ENCODE measurements at regions of chr1 and their contacts with region 1.

Region 1: GRCh38 chr1:88877382-88877825 is 14.0 kb downstream of the GTF2B start:
- DNase-seq: no peak
- ATAC-seq: no peak
- H3K4me3 ChIP-seq: no peak overlapping the region
- H3K27ac ChIP-seq: no peak overlapping the region
- H3K4me1 ChIP-seq: peaks cover 17 to 28% of the 10 kb centered on the region in 2 donors
- H3K27me3 ChIP-seq: no peaks in the 10 kb centered on the region
- CTCF ChIP-seq: peak; percentile 39 to 58 (median 51)
- POLR2A ChIP-seq: no peak

Region 2: DNA sequence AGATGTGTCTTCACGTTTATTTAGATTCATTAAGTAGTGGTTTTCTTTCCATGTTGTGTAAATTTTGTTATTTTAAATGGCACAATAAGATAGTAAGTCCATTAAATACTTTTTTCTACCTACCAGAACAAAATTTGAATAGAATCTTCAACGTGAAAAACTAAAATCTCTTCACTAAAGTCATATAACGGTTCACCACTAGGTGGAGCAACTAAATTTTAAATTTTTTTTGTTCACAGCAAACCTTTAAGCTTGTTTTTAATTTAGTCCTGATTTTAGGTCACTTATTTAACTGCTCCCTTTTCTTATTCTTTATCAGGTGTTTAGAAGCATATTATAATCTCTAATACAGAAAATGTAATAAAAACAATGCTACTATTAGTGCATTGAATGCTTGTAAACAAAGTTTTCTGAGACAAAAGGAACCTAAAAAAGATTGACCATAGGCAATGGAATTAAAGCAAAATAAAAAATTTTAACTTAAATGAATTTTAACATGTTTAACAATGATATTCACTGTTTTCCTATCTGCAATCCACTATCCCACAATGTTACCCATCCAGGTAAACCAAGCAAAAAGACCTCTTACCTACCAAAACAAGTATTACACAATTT is 221.6 kb before region 1 on chr1:
- in situ Hi-C with region 1: loop called (anchors 10 to 25 kb)
- intact Hi-C with region 1: loop called (anchors 5 kb)
- DNase-seq: no peak
- ATAC-seq: no peak
- H3K4me3 ChIP-seq: no peak overlapping the region
- H3K27ac ChIP-seq: no peak overlapping the region
- H3K4me1 ChIP-seq: no peaks in the 10 kb centered on the region
- H3K27me3 ChIP-seq: no peaks in the 10 kb centered on the region
- CTCF ChIP-seq: peak; percentile 30 to 69 (median 61)
- POLR2A ChIP-seq: no peak

Region 3: DNA sequence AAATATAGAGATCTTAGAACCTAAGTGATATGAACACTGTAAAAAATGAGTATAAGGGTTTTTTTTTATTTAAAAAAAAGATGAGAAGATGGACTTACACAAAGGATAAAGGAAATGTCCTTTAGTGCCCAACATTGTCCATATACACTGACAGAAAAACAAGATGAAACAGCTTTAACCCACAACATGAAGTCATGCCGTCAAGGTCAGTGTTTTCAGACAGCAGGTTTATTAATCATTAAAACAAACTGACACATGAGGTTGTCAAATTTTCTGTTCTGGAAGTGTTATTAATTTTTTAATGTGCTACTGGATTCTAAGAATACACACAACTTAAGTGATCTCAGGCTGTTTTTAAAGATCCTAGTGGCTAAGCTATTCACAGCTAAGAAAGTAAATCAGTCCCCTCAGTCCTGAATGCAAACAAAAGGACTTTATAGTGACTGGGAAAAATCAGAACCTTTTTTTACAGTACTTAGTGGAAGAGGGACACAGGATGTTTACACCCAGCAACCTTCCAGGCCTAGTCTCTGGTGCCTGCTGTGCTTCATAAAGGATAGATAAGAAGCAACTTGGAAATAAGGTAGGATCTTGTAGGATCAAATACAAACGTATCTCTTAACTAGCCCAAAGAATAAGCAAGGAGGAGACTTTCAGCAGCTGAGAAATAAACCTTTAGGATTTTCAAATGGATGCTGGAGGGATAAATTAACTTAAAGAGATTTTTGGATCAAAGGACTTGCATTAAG is 215.3 kb before region 1 on chr1:
- in situ Hi-C with region 1: loop called (anchors 10 to 25 kb)
- intact Hi-C with region 1: no loop called
- DNase-seq: no peak
- ATAC-seq: no peak
- H3K4me3 ChIP-seq: no peak overlapping the region
- H3K27ac ChIP-seq: no peak overlapping the region
- H3K4me1 ChIP-seq: no peaks in the 10 kb centered on the region
- H3K27me3 ChIP-seq: no peaks in the 10 kb centered on the region
- CTCF ChIP-seq: no peak
- POLR2A ChIP-seq: no peak

Region 4: GRCh38 chr1:88800382-88801051 is 76.9 kb before region 1 on chr1:
- in situ Hi-C with region 1: loop called in 1 of 4 experiments (anchors 10 kb)
- intact Hi-C with region 1: loop called (anchors 5 kb)
- DNase-seq: no peak
- ATAC-seq: peak in 1 of 2 donors; percentile 66
- H3K4me3 ChIP-seq: no peak overlapping the region
- H3K27ac ChIP-seq: no peak overlapping the region
- H3K4me1 ChIP-seq: no peaks in the 10 kb centered on the region
- H3K27me3 ChIP-seq: no peaks in the 10 kb centered on the region
- CTCF ChIP-seq: peak in 4 of 5 experiments; percentile 28 to 64 (median 45)
- POLR2A ChIP-seq: no peak

Region 5: GRCh38 chr1:88922214-88922613 is 44.8 kb after region 1 on chr1:
- in situ Hi-C with region 1: no loop called
- intact Hi-C with region 1: no loop called
- DNase-seq: no peak
- ATAC-seq: no peak
- H3K4me3 ChIP-seq: no peak overlapping the region
- H3K27ac ChIP-seq: no peak overlapping the region
- H3K4me1 ChIP-seq: no peaks in the 10 kb centered on the region
- H3K27me3 ChIP-seq: no peaks in the 10 kb centered on the region
- CTCF ChIP-seq: no peak
- POLR2A ChIP-seq: no peak

Measured in gastrocnemius medialis (tissue), 4 donors.